Mammary epithelial cell (primary cell): ENCODE measurements at regions of chr15 and their contacts with region 1.

Region 1: DNA sequence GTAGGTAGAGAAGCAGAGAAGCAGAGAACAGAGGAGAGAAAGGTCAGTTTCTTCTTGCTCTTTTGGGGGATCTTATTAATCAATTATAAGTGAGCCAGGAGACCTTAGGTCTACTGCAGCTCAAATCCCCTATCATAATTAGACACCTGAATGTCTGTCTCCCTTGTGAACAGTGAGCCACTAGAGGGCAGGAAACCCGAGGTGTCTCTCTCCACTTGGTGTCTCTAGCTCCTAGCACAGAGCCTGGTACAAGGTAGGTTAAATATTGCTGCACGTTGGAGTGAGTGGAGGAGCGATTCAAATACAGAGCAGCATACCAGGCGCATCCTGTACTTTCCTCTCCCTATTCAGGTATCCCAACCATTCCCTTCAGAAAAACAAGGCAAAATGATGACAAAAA is 2.0 kb upstream of the ST8SIA2 start:
- DNase-seq: peak; percentile 53
- H3K4me3 ChIP-seq: no peak overlapping the region
- H3K27ac ChIP-seq: no peak overlapping the region
- H3K4me1 ChIP-seq: peaks cover 9% of the 10 kb centered on the region
- H3K27me3 ChIP-seq: peaks cover 27% of the 10 kb centered on the region
- CTCF ChIP-seq: peak; percentile 68 to 77

Region 2: GRCh38 chr15:92322566-92323355 is 68.9 kb before region 1 on chr15:
- CTCF ChIA-PET with region 1: interaction called, 15 read pairs
- dilution Hi-C with region 1: no loop called
- in situ Hi-C with region 1: no loop called
- intact Hi-C with region 1: no loop called
- DNase-seq: no peak
- H3K4me3 ChIP-seq: no peak overlapping the region
- H3K27ac ChIP-seq: no peak overlapping the region
- H3K4me1 ChIP-seq: no peaks in the 10 kb centered on the region
- H3K27me3 ChIP-seq: peaks cover 3% of the 10 kb centered on the region
- CTCF ChIP-seq: no peak